Tibial artery (tissue), 4 donors: ENCODE measurements at regions of chr1 and their contacts with region 1.

Region 1: DNA sequence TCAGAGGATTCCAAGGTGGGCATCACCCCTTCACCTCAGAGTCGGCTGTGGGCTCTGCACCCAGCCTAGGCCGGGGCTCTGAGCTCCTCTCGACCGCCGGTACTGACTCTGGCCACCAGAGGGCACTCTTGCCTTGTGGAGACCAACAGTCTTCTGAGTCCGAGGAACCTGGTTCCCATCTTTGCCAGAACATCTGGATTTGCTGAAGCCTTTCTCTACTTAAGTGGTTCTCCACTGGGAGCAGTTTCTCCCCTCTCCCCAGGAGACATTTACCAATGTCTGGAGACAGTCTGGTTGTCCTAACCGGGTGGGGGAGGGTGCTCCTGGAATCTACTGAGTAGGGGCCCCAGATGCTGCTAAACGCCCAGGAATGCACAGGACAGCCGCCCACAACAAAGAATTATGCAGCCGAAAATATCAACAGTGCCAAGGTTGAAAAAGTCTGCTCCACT is 9.4 kb downstream of the ETV3L start:
- DNase-seq: peak; percentile 87
- H3K4me3 ChIP-seq: no peak overlapping the region
- H3K27ac ChIP-seq: no peak overlapping the region
- H3K4me1 ChIP-seq: peaks cover 0 to 18% (median 4%) of the 10 kb centered on the region in 4 donors
- H3K27me3 ChIP-seq: peaks cover 0 to 8% of the 10 kb centered on the region in 2 donors
- CTCF ChIP-seq: peak; percentile 91 to 93

Region 2: GRCh38 chr1:156539818-156540355 is 550.3 kb before region 1 on chr1:
- intact Hi-C with region 1: no loop called
- DNase-seq: no peak
- H3K4me3 ChIP-seq: no peak overlapping the region
- H3K27ac ChIP-seq: no peak overlapping the region
- H3K4me1 ChIP-seq: no peaks in the 10 kb centered on the region
- H3K27me3 ChIP-seq: no peaks in the 10 kb centered on the region
- CTCF ChIP-seq: no peak

Region 3: DNA sequence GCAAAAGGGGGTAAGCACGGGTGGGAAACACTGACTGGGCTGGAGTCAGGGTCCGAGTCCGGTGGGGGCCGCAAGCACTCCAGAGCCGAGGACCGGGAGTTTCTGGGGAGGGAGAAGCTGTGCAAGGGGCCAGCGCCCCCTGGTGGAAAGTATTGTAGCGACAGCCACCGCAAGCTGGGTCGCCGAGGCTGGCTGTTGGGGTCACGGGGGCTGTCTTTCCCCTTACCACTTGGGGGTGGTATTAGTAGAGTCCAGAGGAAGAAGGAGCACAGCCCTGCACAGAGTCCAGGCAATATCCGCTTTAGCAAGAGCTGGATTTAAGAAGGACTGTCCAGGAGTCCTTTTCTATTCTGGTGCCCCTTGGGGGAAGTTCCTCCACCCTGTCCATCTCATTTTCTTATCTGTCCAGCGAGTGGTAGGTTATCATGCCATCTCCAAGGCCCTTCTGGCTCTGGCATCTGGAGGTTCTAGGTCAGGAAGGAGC is 65.9 kb after region 1 on chr1:
- intact Hi-C with region 1: loop called (anchors 1 kb)
- DNase-seq: peak; percentile 55 to 81
- H3K4me3 ChIP-seq: peak overlapping the region in 1 of 2 donors; percentile 32
- H3K27ac ChIP-seq: no peak overlapping the region
- H3K4me1 ChIP-seq: peaks cover 0 to 17% (median 12%) of the 10 kb centered on the region in 4 donors
- H3K27me3 ChIP-seq: peaks cover 0 to 10% of the 10 kb centered on the region in 2 donors
- CTCF ChIP-seq: peak; percentile 94 to 96